Mammary epithelial cell (primary cell): ENCODE measurements at regions of chr5 and their contacts with region 1.

Region 1: GRCh38 chr5:177403792-177404640 is 3.6 kb upstream of the PFN3 start:
- DNase-seq: peak; percentile 65
- H3K4me3 ChIP-seq: peak overlapping the region; percentile 55 to 74 (median 65)
- H3K27ac ChIP-seq: no peak overlapping the region
- H3K4me1 ChIP-seq: peaks cover 28% of the 10 kb centered on the region
- H3K27me3 ChIP-seq: no peaks in the 10 kb centered on the region
- CTCF ChIP-seq: peak; percentile 35 to 82

Region 2: GRCh38 chr5:177317959-177318377 is 86.0 kb before region 1 on chr5:
- CTCF ChIA-PET with region 1: no interaction called
- dilution Hi-C with region 1: no loop called
- in situ Hi-C with region 1: loop called in 1 of 2 experiments (anchors 5 kb)
- intact Hi-C with region 1: loop called (anchors 1 kb)
- DNase-seq: peak; percentile 61
- H3K4me3 ChIP-seq: no peak overlapping the region
- H3K27ac ChIP-seq: no peak overlapping the region
- H3K4me1 ChIP-seq: peaks cover 2% of the 10 kb centered on the region
- H3K27me3 ChIP-seq: no peaks in the 10 kb centered on the region
- CTCF ChIP-seq: peak; percentile 88

Region 3: GRCh38 chr5:177390363-177391300 is 13.4 kb before region 1 on chr5:
- CTCF ChIA-PET with region 1: interaction called, 11 read pairs
- dilution Hi-C with region 1: no loop called
- in situ Hi-C with region 1: no loop called
- intact Hi-C with region 1: loop called (anchors 1 kb)
- DNase-seq: peak; percentile 73
- H3K4me3 ChIP-seq: no peak overlapping the region
- H3K27ac ChIP-seq: peak overlapping the region; percentile 68
- H3K4me1 ChIP-seq: peaks cover 29% of the 10 kb centered on the region
- H3K27me3 ChIP-seq: no peaks in the 10 kb centered on the region
- CTCF ChIP-seq: peak; percentile 89 to 94

Region 4: DNA sequence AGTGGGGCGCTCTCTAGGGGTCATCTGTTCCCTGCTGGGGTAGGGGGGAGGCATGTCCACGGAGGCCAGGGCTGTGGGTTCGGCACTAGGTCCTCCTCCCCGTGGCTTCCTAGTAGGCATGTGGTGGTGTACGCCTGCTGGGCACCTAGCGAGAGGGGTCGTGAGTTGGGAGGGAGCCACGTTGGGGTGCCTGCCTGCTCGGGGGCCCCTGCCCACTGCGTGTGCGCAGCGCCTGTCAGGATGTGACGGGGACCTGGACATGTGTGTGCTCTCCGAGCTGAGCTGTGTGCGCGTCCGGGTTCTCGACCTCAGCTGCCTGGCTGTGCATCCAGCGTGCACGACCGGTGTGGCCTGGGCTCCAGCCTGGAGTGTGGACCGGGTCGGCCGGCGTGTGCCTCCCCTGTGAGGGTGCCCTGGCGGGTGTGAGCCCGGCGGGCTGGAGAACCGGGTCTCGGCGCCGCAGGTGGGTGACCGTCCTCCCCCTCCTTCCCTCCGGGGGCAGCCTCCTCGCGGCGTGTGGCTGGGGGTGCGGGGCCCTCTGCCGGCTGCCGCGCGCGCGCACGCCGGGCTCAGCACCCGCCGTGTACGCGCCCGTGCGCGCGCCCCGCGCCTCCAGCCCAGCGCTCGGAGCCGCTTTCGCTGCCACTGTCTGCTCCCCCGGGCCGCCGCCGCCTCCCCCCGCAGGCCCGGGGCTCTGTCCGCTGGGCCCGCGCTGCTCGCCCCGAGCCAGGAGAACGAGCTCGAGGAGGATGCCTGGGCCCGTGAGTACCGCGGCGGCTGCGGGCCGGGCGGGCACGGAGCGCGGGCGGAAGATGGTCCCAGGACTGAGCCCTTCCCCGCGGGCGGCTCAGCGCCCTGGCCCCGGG is 42.4 kb after region 1 on chr5 and contains the start of gene PRR7:
- CTCF ChIA-PET with region 1: interaction called, 3 read pairs
- dilution Hi-C with region 1: loop called (anchors 5 kb)
- in situ Hi-C with region 1: no loop called
- intact Hi-C with region 1: no loop called
- DNase-seq: peak; percentile 60
- H3K4me3 ChIP-seq: peak within 1 kb of the TSS; percentile 19 to 67 (median 56)
- H3K27ac ChIP-seq: peak within 1 kb of the TSS; percentile 69
- H3K4me1 ChIP-seq: peaks cover 28% of the 10 kb centered on the region
- H3K27me3 ChIP-seq: no peaks in the 10 kb centered on the region
- CTCF ChIP-seq: no peak
- total RNA-seq, gene PRR7: 13.9 to 23.3 TPM

Region 5: GRCh38 chr5:177516604-177517568 is 112.9 kb after region 1 on chr5 and contains the start of gene DDX41:
- CTCF ChIA-PET with region 1: no interaction called
- dilution Hi-C with region 1: loop called (anchors 5 kb)
- in situ Hi-C with region 1: no loop called
- intact Hi-C with region 1: no loop called
- DNase-seq: peak; percentile 99
- H3K4me3 ChIP-seq: peak within 1 kb of the TSS; percentile 57 to 100 (median 86)
- H3K27ac ChIP-seq: peak within 1 kb of the TSS; percentile 54
- H3K4me1 ChIP-seq: peaks cover 14% of the 10 kb centered on the region
- H3K27me3 ChIP-seq: no peaks in the 10 kb centered on the region
- CTCF ChIP-seq: peak in 1 of 2 donors; percentile 20
- total RNA-seq, gene DDX41: 60.7 to 80.6 TPM